MCF 10A (cell line): ENCODE measurements at regions of chr3 and their contacts with region 1.

Region 1: GRCh38 chr3:12663936-12664908 is at the start of gene RAF1:
- DNase-seq: peak; percentile 97
- H3K4me3 Mint-ChIP-seq: peak within 1 kb of the TSS; percentile 72
- H3K27ac Mint-ChIP-seq: peak within 1 kb of the TSS; percentile 98
- H3K4me1 Mint-ChIP-seq: peaks cover 18% of the 10 kb centered on the region
- H3K27me3 Mint-ChIP-seq: no peaks in the 10 kb centered on the region
- CTCF ChIP-seq: no peak
- total RNA-seq, gene RAF1: 75.5 and 76.8 TPM in 2 replicates

Region 2: GRCh38 chr3:12556671-12557472 is 107.3 kb before region 1 on chr3 and contains the start of gene MKRN2:
- CTCF ChIA-PET with region 1: interaction called, 3 read pairs
- POLR2A ChIA-PET with region 1: interaction called, 36 read pairs
- intact Hi-C with region 1: loop called (anchors 5 kb)
- DNase-seq: peak; percentile 89
- H3K4me3 Mint-ChIP-seq: peak within 1 kb of the TSS; percentile 73
- H3K27ac Mint-ChIP-seq: peak within 1 kb of the TSS; percentile 65
- H3K4me1 Mint-ChIP-seq: peaks cover 35% of the 10 kb centered on the region
- H3K27me3 Mint-ChIP-seq: no peaks in the 10 kb centered on the region
- CTCF ChIP-seq: no peak
- total RNA-seq, gene MKRN2: 22.0 and 25.6 TPM in 2 replicates

Region 3: DNA sequence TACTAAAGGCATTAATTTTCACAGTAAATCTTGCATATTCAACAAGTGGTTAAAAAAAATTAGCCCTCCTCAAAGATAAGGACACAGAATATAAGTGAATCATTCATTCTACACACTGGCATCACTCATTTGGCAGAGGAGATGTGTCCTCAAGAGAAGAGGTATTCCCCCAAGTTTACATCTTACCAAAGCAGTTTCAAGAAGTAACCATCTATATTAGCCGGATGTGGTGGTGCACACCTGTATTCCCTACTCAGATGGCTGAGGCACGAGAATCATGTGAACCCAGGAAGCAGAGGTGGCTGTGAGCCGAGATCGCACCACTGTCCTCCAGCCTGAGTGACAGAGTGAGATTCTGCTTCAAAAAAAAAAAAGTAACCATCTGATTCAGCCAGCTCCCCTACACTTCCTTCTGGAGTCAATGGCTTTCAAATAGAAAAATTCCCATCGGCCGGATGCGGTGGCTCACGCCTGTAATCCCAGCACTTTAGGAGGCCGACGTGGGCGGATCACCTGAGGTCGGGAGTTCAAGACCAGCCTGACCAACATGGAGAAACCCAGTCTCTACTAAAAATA is 15.8 kb before region 1 on chr3:
- CTCF ChIA-PET with region 1: interaction called, 8 read pairs
- POLR2A ChIA-PET with region 1: interaction called, 19 read pairs
- intact Hi-C with region 1: loop called (anchors 2 kb)
- DNase-seq: no peak
- H3K4me3 Mint-ChIP-seq: peak overlapping the region; percentile 30
- H3K27ac Mint-ChIP-seq: peak overlapping the region; percentile 90
- H3K4me1 Mint-ChIP-seq: peaks cover 11% of the 10 kb centered on the region
- H3K27me3 Mint-ChIP-seq: no peaks in the 10 kb centered on the region
- CTCF ChIP-seq: no peak

Region 4: GRCh38 chr3:12706504-12707253 is 42.5 kb after region 1 on chr3:
- CTCF ChIA-PET with region 1: no interaction called
- POLR2A ChIA-PET with region 1: interaction called, 35 read pairs
- intact Hi-C with region 1: loop called (anchors 2 kb)
- DNase-seq: peak; percentile 91
- H3K4me3 Mint-ChIP-seq: no peak overlapping the region
- H3K27ac Mint-ChIP-seq: no peak overlapping the region
- H3K4me1 Mint-ChIP-seq: peaks cover 42% of the 10 kb centered on the region
- H3K27me3 Mint-ChIP-seq: no peaks in the 10 kb centered on the region
- CTCF ChIP-seq: peak; percentile 59

Region 5: GRCh38 chr3:12758025-12758830 is 94.0 kb after region 1 on chr3:
- CTCF ChIA-PET with region 1: interaction called, 3 read pairs
- POLR2A ChIA-PET with region 1: interaction called, 33 read pairs
- intact Hi-C with region 1: no loop called
- DNase-seq: peak; percentile 61
- H3K4me3 Mint-ChIP-seq: peak overlapping the region; percentile 43
- H3K27ac Mint-ChIP-seq: peak overlapping the region; percentile 74
- H3K4me1 Mint-ChIP-seq: peaks cover 53% of the 10 kb centered on the region
- H3K27me3 Mint-ChIP-seq: no peaks in the 10 kb centered on the region
- CTCF ChIP-seq: no peak